ENCODE measurements at regions of chr11 and their contacts with region 1.

Region 1: DNA sequence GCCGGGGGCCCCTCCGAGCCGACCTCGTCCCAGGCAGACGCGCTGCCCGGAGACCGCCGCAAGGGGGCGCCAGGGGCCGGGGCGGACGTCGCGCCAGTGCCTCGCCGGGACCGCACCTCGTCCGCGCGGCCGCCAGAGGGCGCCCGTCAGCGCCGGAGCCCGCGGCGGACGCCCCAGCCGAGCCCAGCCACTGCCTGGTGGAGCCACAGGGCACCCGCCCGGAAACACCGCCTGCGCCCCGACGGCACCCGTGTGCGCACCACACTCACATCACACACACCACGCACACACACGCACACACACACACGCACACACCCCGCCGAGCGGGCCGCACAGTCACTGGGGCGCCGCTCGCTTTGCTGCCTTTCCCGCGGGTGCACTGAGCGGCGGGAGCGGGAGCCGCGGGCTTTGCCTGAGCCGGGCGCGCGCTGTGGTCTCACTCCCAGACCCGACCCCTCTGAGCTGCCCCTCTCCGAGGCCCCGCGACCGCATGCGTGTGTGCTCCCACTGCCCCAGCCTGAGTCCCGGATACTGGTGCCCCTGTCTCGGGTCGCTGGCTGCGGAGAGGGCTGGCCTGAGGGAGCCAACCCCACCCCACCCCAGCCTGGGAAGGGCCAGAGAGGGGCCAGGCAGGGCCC is 449.3 kb downstream of the OPCML start:
- DNase-seq: peak; percentile 95
- H3K4me3 ChIP-seq: peak overlapping the region; percentile 21 to 44; a peak in 3 of 4 replicates
- H3K27ac ChIP-seq: no peak overlapping the region
- H3K4me1 ChIP-seq: no peaks in the 10 kb centered on the region; a peak in 1 of 4 replicates
- H3K27me3 ChIP-seq: no peaks in the 10 kb centered on the region
- CTCF ChIP-seq: peak; percentile 48
- EP300 ChIP-seq: no peak
- RAD21 ChIP-seq: peak; percentile 54

Region 2: GRCh38 chr11:133038850-133039249 is 44.1 kb before region 1 on chr11:
- CTCF ChIA-PET with region 1: interaction called, 11 read pairs
- POLR2A ChIA-PET with region 1: no interaction called
- DNase-seq: no peak
- H3K4me3 ChIP-seq: no peak overlapping the region
- H3K27ac ChIP-seq: no peak overlapping the region
- H3K4me1 ChIP-seq: no peaks in the 10 kb centered on the region
- H3K27me3 ChIP-seq: no peaks in the 10 kb centered on the region
- CTCF ChIP-seq: no peak
- EP300 ChIP-seq: no peak
- RAD21 ChIP-seq: no peak

Region 3: DNA sequence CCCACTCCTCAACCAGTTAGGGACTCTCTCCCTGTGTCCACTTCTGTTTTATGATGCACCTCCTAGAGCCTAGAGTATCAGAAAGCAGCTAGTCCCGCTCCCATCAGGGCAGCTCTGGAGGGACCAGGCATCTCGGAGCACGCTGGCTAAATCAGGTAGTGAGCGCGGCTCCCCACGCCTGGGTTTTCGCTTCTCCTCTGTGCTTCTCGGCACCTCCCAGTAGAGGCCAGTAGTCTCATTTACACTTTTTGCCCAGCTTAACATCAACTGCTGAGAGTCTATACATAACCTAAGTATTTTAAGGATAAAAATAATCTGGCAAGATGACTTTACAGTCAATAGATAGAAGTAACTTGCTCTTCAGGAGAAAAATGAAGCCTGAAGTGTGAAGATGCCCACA is 24.5 kb before region 1 on chr11:
- CTCF ChIA-PET with region 1: interaction called, 45 read pairs
- POLR2A ChIA-PET with region 1: no interaction called
- DNase-seq: no peak
- H3K4me3 ChIP-seq: no peak overlapping the region; a peak in 1 of 4 replicates
- H3K27ac ChIP-seq: no peak overlapping the region
- H3K4me1 ChIP-seq: no peaks in the 10 kb centered on the region
- H3K27me3 ChIP-seq: no peaks in the 10 kb centered on the region
- CTCF ChIP-seq: no peak
- EP300 ChIP-seq: no peak
- RAD21 ChIP-seq: no peak

Region 4: DNA sequence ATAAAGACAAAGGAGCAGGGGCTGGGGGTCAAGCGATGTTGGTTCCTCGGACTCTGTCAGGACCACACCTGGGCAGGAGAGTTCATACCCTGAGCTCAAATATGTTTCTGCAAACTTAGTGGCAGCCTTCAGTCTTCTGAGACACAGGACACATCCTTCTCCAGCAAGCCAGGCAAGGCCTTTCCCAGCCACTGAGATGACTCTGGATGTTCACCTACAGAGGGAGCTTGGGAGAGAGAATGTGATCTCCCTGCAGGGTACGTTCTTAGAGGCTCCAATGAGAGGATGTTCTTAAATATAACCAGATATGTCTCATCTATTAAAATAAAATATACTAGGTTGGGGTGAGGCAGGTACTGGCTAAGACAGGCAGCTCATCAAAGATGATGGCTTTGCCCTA is 12.2 kb before region 1 on chr11:
- CTCF ChIA-PET with region 1: interaction called, 28 read pairs
- POLR2A ChIA-PET with region 1: no interaction called
- DNase-seq: no peak
- H3K4me3 ChIP-seq: no peak overlapping the region
- H3K27ac ChIP-seq: no peak overlapping the region
- H3K4me1 ChIP-seq: no peaks in the 10 kb centered on the region
- H3K27me3 ChIP-seq: no peaks in the 10 kb centered on the region
- CTCF ChIP-seq: no peak
- EP300 ChIP-seq: no peak
- RAD21 ChIP-seq: no peak

Region 5: DNA sequence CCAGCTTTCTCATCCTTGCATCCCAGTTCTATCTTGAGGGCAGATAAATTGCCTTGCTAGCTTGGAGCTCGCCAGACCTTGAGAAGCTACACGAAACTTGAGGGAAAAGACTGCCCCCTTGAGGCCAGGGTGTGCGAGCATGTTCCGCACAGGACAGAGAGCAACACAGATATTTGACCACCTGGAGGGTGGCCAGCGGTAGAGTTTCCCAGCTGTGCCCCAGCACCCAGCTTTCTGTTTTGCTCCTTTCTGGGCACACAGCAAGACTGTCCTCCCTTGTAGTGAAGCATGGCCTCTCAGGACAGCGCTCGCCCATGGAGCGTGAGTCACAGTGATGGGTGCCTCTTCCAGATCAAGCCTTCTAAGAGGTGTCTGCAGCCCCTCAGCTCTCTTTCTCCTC is 738.8 kb after region 1 on chr11:
- CTCF ChIA-PET with region 1: interaction called, 18 read pairs
- POLR2A ChIA-PET with region 1: no interaction called
- DNase-seq: peak; percentile 66
- H3K4me3 ChIP-seq: peak overlapping the region in 1 of 2 experiments; percentile 32; a peak in 1 of 4 replicates
- H3K27ac ChIP-seq: no peak overlapping the region
- H3K4me1 ChIP-seq: no peaks in the 10 kb centered on the region; a peak in 1 of 4 replicates
- H3K27me3 ChIP-seq: no peaks in the 10 kb centered on the region
- CTCF ChIP-seq: peak; percentile 25; the same call in 1 of the 2 replicates
- EP300 ChIP-seq: no peak
- RAD21 ChIP-seq: peak; percentile 69